GM12878 (cell line): ENCODE measurements at regions of chr12 and their contacts with region 1.

Region 1: GRCh38 chr12:113098446-113098896 is 37.1 kb downstream of the RASAL1 start:
- DNase-seq: no peak
- ATAC-seq: peak; percentile 91
- H3K4me3 ChIP-seq: no peak overlapping the region
- H3K27ac ChIP-seq: no peak overlapping the region
- H3K4me1 ChIP-seq: peaks cover 10% of the 10 kb centered on the region; the same call in 1 of the 2 replicates
- H3K27me3 ChIP-seq: no peaks in the 10 kb centered on the region
- CTCF ChIP-seq: peak; percentile 95 to 98 (median 97); a peak in 5 of 6 replicates
- EP300 ChIP-seq: no peak
- POLR2A ChIP-seq: no peak
- RAD21 ChIP-seq: peak; percentile 93

Region 2: DNA sequence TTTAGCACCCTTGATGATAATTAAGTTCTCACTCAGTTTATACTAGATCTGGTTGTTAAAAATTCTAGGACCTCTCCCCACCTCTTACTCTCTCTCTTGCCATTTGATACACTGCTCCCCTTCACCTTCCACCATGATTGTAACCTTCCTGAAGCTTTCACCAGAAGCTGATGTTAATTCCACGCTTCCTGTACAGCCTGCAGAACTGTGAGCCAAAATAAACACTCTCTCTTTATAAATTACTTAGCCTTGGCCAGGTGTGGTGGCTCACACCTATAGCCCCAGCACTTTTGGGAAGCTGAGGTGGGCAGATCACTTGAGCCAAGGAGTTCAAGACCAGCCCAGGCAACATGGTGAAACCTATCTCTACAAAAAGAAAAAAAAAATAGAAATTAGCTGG is 705.1 kb before region 1 on chr12:
- CTCF ChIA-PET with region 1: no interaction called
- POLR2A ChIA-PET with region 1: no interaction called
- RAD21 ChIA-PET with region 1: no interaction called
- SMC1A ChIA-PET with region 1: no interaction called
- in situ Hi-C with region 1: no loop called
- intact Hi-C with region 1: no loop called
- DNase-seq: no peak
- ATAC-seq: no peak
- H3K4me3 ChIP-seq: no peak overlapping the region
- H3K27ac ChIP-seq: no peak overlapping the region
- H3K4me1 ChIP-seq: no peaks in the 10 kb centered on the region
- H3K27me3 ChIP-seq: no peaks in the 10 kb centered on the region
- CTCF ChIP-seq: no peak
- EP300 ChIP-seq: no peak
- POLR2A ChIP-seq: no peak
- RAD21 ChIP-seq: no peak

Region 3: DNA sequence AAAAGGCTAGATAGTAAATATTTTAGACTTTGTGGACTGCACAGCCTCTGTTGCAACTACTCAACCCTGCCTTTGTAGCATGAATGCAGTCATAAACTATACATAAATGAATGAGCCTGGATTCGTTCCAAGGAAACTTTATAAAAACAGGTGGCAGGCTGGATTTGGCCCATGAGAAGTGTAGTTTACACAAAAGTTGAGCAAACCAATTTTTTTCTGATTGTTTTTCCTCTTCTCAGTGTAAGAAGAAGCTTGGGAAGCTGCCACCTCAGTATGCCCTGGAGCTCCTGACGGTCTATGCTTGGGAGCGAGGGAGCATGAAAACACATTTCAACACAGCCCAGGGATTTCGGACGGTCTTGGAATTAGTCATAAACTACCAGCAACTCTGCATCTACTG is 182.2 kb before region 1 on chr12:
- CTCF ChIA-PET with region 1: no interaction called
- POLR2A ChIA-PET with region 1: no interaction called
- RAD21 ChIA-PET with region 1: no interaction called
- SMC1A ChIA-PET with region 1: no interaction called
- in situ Hi-C with region 1: no loop called
- intact Hi-C with region 1: no loop called
- DNase-seq: no peak
- ATAC-seq: no peak
- H3K4me3 ChIP-seq: no peak overlapping the region
- H3K27ac ChIP-seq: no peak overlapping the region
- H3K4me1 ChIP-seq: no peaks in the 10 kb centered on the region
- H3K27me3 ChIP-seq: no peaks in the 10 kb centered on the region
- CTCF ChIP-seq: no peak
- EP300 ChIP-seq: no peak
- POLR2A ChIP-seq: no peak
- RAD21 ChIP-seq: no peak

Region 4: DNA sequence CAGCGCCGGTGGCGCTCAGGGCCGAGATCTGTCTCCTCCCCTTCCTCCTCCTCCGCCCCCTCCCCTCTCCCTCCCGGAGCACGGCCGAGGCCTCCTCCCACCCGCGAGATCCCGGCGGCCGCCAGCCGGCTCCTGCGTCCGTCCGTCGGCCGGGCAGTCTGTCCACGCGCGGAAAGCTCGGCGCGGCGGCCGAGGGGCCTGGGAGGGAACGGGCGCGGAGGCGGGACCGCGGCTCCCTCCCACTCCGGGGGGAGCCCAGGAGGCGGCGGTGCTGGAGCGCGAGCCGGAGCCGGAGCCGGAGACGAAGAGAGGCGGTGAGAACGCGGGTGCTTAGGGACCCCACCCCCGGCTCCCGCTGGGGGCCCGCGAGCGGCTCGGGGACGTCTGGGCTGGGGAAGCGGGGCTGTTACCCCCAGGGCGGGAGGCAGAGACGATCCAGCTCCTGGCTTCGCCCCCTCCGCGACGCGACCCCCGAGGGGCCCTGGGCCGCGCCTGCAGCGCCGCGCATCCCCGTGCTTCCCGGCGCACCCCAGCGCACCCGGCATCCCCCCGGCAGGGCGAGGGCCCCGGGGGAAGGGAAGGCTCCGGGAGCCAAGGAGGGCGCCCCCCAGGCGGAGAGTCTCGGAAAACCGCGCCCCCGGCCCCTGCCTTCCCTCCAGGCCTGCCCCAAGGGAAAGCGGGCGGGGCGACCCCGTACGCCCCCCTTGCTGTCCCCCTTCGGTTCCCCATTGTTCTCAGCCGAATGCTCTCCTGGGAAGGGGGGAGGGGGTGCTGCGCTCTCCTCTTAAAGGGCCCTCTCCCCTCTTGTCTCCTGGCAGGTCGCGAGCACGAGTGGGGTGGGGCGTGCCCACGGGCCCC is 41.6 kb before region 1 on chr12 and contains the start of gene DTX1:
- CTCF ChIA-PET with region 1: interaction called, 121 read pairs
- POLR2A ChIA-PET with region 1: no interaction called
- RAD21 ChIA-PET with region 1: interaction called, 50 read pairs
- SMC1A ChIA-PET with region 1: interaction called, 416 read pairs
- in situ Hi-C with region 1: no loop called
- intact Hi-C with region 1: no loop called
- DNase-seq: no peak
- ATAC-seq: peak; percentile 57
- H3K4me3 ChIP-seq: peak within 1 kb of the TSS; percentile 62
- H3K27ac ChIP-seq: no peak within 1 kb of the TSS
- H3K4me1 ChIP-seq: peaks cover 7% of the 10 kb centered on the region
- H3K27me3 ChIP-seq: peaks cover 1 to 9% of the 10 kb centered on the region in 2 experiments; a peak in 3 of 4 replicates
- CTCF ChIP-seq: peak in 2 of 3 experiments; percentile 7 to 19; a peak in 2 of 6 replicates
- EP300 ChIP-seq: no peak
- POLR2A ChIP-seq: no peak
- RAD21 ChIP-seq: no peak
- polyA plus RNA-seq, gene DTX1: 0.13 to 0.32 TPM

Region 5: GRCh38 chr12:113065126-113066007 is 33.1 kb before region 1 on chr12:
- CTCF ChIA-PET with region 1: interaction called, 98 read pairs
- POLR2A ChIA-PET with region 1: interaction called, 4 read pairs
- RAD21 ChIA-PET with region 1: interaction called, 39 read pairs
- SMC1A ChIA-PET with region 1: interaction called, 416 read pairs
- in situ Hi-C with region 1: no loop called
- intact Hi-C with region 1: no loop called
- DNase-seq: no peak
- ATAC-seq: peak; percentile 5; the same call in 2 of the 3 replicates
- H3K4me3 ChIP-seq: no peak overlapping the region
- H3K27ac ChIP-seq: no peak overlapping the region
- H3K4me1 ChIP-seq: peaks cover 39% of the 10 kb centered on the region
- H3K27me3 ChIP-seq: peaks cover 0 to 4% of the 10 kb centered on the region in 2 experiments; a peak in 1 of 4 replicates
- CTCF ChIP-seq: no peak
- EP300 ChIP-seq: no peak
- POLR2A ChIP-seq: no peak
- RAD21 ChIP-seq: no peak

Region 6: DNA sequence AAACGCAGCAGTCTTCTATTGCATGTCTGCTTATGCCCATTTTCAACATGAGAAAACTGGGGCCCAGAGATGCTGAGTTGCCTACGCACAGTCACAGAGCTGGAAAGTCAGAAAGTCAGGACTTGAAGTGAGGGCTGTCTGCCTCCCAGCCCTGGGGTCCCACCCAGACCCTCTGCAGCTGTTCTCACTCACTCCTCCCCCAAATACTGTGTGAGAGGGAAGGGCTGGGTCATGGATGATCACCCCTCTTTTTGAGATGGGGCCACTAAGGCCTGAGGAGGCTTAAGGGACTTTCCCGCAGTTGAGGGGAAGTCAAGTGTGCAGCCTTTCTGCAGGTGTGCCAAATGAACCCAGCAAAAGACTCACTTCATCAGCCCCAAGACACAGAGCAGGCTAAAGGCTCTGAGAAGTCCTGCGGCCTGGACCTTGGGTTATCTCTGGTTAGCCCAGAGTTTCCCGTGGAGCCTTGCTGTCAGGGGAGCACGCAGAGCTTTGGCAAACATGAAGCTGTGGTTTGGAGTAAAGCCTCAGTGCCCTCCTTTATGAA is 23.3 kb before region 1 on chr12:
- CTCF ChIA-PET with region 1: interaction called, 12 read pairs
- POLR2A ChIA-PET with region 1: no interaction called
- RAD21 ChIA-PET with region 1: interaction called, 5 read pairs
- SMC1A ChIA-PET with region 1: interaction called, 9 read pairs
- in situ Hi-C with region 1: no loop called
- intact Hi-C with region 1: no loop called
- DNase-seq: peak; percentile 95
- ATAC-seq: peak; percentile 94
- H3K4me3 ChIP-seq: peak overlapping the region; percentile 43; the same call in 1 of the 2 replicates
- H3K27ac ChIP-seq: peak overlapping the region; percentile 71
- H3K4me1 ChIP-seq: peaks cover 53% of the 10 kb centered on the region
- H3K27me3 ChIP-seq: no peaks in the 10 kb centered on the region
- CTCF ChIP-seq: no peak
- EP300 ChIP-seq: peak; percentile 63 to 82; a peak in 2 of 4 replicates
- POLR2A ChIP-seq: peak; percentile 30; the same call in 1 of the 2 replicates
- RAD21 ChIP-seq: 0 out of 2 replicates have a peak, but pooled peaks have one; percentile 8

Region 7: GRCh38 chr12:113086249-113087164 is 12.0 kb before region 1 on chr12:
- CTCF ChIA-PET with region 1: interaction called, 13 read pairs
- POLR2A ChIA-PET with region 1: interaction called, 5 read pairs
- RAD21 ChIA-PET with region 1: interaction called, 11 read pairs
- SMC1A ChIA-PET with region 1: interaction called, 9 read pairs
- in situ Hi-C with region 1: no loop called
- intact Hi-C with region 1: no loop called
- DNase-seq: peak; percentile 62
- ATAC-seq: peak; percentile 55
- H3K4me3 ChIP-seq: peak overlapping the region; percentile 2; the same call in 1 of the 2 replicates
- H3K27ac ChIP-seq: peak overlapping the region; percentile 80
- H3K4me1 ChIP-seq: peaks cover 67% of the 10 kb centered on the region
- H3K27me3 ChIP-seq: no peaks in the 10 kb centered on the region
- CTCF ChIP-seq: no peak
- EP300 ChIP-seq: 0 out of 4 replicates have a peak, but pooled peaks of 1 of the 2 experiments have one; percentile 38
- POLR2A ChIP-seq: no peak
- RAD21 ChIP-seq: no peak

Region 8: GRCh38 chr12:113115455-113116126 is 17.1 kb after region 1 on chr12:
- CTCF ChIA-PET with region 1: no interaction called
- POLR2A ChIA-PET with region 1: no interaction called
- RAD21 ChIA-PET with region 1: no interaction called
- SMC1A ChIA-PET with region 1: no interaction called
- in situ Hi-C with region 1: no loop called
- intact Hi-C with region 1: no loop called
- DNase-seq: no peak
- ATAC-seq: no peak
- H3K4me3 ChIP-seq: no peak overlapping the region
- H3K27ac ChIP-seq: no peak overlapping the region
- H3K4me1 ChIP-seq: no peaks in the 10 kb centered on the region
- H3K27me3 ChIP-seq: no peaks in the 10 kb centered on the region; a peak in 2 of 4 replicates
- CTCF ChIP-seq: no peak
- EP300 ChIP-seq: no peak
- POLR2A ChIP-seq: no peak
- RAD21 ChIP-seq: no peak

Region 9: GRCh38 chr12:113152835-113153814 is 54.7 kb after region 1 on chr12:
- CTCF ChIA-PET with region 1: interaction called, 10 read pairs
- POLR2A ChIA-PET with region 1: interaction called, 3 read pairs
- RAD21 ChIA-PET with region 1: interaction called, 6 read pairs
- SMC1A ChIA-PET with region 1: interaction called, 9 read pairs
- in situ Hi-C with region 1: no loop called
- intact Hi-C with region 1: no loop called
- DNase-seq: no peak
- ATAC-seq: peak; percentile 89
- H3K4me3 ChIP-seq: peak overlapping the region; percentile 59; the same call in 1 of the 2 replicates
- H3K27ac ChIP-seq: no peak overlapping the region
- H3K4me1 ChIP-seq: peaks cover 15% of the 10 kb centered on the region
- H3K27me3 ChIP-seq: peaks cover 7 to 8% of the 10 kb centered on the region in 2 experiments; a peak in 2 of 4 replicates
- CTCF ChIP-seq: peak; percentile 45 to 77 (median 53); a peak in 5 of 6 replicates
- EP300 ChIP-seq: no peak
- POLR2A ChIP-seq: no peak
- RAD21 ChIP-seq: peak; percentile 59

Region 10: DNA sequence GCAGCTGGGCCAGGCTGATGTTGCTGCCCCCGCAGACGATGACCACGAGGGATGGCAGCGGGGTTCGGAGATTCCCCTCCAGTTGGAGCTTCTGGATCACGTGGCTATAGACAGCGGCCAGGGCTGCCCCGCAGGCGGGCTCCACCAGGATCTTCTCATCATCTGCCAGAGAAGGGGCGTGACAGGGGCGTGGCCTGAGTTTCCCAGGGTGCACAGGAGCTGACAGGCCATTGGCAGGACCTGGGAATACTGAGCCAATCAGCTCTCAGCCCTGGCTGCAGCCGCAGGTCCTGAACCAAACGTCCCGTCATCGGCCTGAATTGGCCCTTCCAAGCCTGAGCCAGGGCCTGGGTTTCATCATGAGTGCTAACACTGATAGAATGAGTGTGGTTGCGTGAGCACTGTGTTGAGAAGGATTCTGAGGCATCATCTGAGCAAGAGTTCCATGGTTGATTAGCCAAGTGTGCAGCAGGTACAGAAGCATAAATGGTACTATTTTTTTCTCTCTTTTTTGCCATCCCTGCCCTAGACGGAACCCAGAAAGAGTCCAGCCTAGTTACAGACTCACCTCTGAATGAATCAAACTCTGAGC is 294.6 kb after region 1 on chr12:
- CTCF ChIA-PET with region 1: no interaction called
- POLR2A ChIA-PET with region 1: no interaction called
- RAD21 ChIA-PET with region 1: no interaction called
- SMC1A ChIA-PET with region 1: no interaction called
- in situ Hi-C with region 1: no loop called
- intact Hi-C with region 1: no loop called
- DNase-seq: peak; percentile 59
- ATAC-seq: peak; percentile 86
- H3K4me3 ChIP-seq: no peak overlapping the region
- H3K27ac ChIP-seq: no peak overlapping the region
- H3K4me1 ChIP-seq: no peaks in the 10 kb centered on the region; the same call in 1 of the 2 replicates
- H3K27me3 ChIP-seq: no peaks in the 10 kb centered on the region
- CTCF ChIP-seq: no peak
- EP300 ChIP-seq: no peak
- POLR2A ChIP-seq: no peak
- RAD21 ChIP-seq: no peak